ENCODE measurements at regions of chr3 and their contacts with region 1.

Region 1: GRCh38 chr3:165868088-165868487 is 30.9 kb upstream of the BCHE start:
- DNase-seq: no peak

Region 2: DNA sequence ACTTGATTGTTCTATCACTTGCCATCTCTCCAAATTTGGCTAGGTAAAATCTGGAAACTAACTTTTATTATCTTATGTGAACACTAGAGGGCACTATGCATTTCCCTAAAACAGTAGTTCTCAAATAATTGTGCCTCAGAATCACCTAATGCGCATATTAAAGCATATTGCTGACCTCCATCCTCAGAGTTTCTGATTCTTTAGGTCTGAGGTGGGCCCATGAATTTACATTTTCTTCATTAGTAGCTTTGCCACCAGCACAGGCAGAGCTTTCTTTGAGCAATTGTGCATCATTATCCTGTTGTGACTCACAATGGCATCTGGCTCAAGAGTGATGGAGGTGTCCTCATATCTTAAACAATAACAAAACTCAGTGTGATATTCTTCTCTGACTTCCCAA is 13.4 kb before region 1 on chr3:
- CTCF ChIA-PET with region 1: interaction called, 10 read pairs
- POLR2A ChIA-PET with region 1: no interaction called
- DNase-seq: peak; percentile 12

Region 3: DNA sequence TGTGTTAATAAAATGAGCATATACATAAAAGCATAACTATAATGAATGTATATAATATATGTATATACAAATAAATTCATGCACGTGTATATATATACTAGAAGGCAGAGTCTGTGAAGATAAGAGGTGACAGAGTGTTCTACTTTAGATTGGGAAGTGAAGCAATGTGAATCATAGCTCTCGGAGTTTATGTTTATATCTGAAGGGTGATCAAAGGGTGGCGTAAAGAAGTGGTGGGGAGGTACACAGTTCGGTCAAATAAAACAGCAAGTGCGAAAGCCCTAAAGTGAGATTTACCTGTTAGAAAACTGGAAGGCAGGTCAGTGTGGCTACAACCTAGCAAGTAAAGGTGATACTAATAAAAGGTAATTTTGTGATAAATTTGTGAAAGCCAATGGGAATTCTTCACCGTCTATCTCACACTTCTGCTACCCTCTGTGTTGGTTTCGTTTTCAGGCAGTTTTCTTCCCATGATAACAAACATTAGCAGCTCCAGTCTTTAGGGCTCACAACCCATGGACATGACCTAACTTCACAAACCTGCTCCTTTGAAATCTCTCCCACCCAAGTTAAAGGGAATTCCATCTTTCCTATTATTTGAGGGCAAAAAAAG is 15.9 kb after region 1 on chr3:
- CTCF ChIA-PET with region 1: no interaction called
- POLR2A ChIA-PET with region 1: no interaction called
- DNase-seq: peak; percentile 7

Measured in HEK293T (cell line).